Activated naive CD4-positive, alpha-beta T cell treated with anti-CD3 and anti-CD28 coated beads for 36 hours (primary cell): ENCODE measurements at regions of chr10 and their contacts with region 1.

Region 1: DNA sequence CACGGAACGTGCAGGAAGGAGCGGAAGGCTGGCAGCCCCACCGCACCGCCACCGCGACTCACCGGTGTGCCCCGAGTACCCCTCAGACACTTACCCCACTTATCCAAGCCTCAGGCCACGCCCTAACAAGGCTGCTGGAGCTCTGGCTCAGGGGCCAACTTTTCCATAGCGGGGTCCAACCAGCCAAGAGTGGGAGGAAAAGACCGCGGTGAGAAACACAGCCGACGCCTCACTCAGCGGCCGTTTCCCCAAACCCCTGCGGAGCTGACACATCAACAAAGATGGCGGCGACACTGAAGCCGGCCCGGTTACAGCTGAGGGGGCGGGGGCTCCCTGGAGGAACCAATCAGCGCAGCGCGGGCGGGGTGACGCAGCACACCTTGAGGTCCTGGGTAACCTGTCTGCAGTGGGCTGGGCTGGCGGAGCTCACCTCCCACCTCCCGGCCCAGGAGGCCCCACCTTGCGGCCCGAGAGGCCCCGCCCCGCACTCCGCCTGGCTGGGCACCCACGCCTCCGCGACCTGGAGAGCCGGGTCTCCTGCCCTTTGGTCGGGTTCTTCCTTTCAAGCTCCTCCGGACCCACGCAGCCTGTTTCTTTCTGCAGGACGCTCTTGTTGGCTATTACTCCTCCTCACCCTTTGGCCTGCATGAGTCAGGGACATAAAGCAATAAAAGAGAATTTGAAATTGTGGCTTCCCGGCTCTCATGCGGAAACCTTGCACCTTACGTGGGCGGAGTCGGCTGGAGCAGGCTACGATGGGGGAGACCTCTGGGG is at the start of gene CCDC186:
- DNase-seq: peak; percentile 99
- H3K4me3 Mint-ChIP-seq: peak within 1 kb of the TSS; percentile 98
- H3K27ac Mint-ChIP-seq: peak within 1 kb of the TSS; percentile 93
- H3K4me1 Mint-ChIP-seq: peaks cover 27% of the 10 kb centered on the region
- H3K27me3 Mint-ChIP-seq: no peaks in the 10 kb centered on the region
- total RNA-seq, gene CCDC186: 10.3 to 13.7 TPM

Region 2: GRCh38 chr10:113960617-113961181 is 213.4 kb before region 1 on chr10:
- CTCF ChIA-PET with region 1: no interaction called
- intact Hi-C with region 1: loop called (anchors 2 kb)
- DNase-seq: peak; percentile 39
- H3K4me3 Mint-ChIP-seq: no peak overlapping the region
- H3K27ac Mint-ChIP-seq: no peak overlapping the region
- H3K4me1 Mint-ChIP-seq: peaks cover 37% of the 10 kb centered on the region
- H3K27me3 Mint-ChIP-seq: peaks cover 7% of the 10 kb centered on the region

Region 3: GRCh38 chr10:114195079-114195478 is 21.0 kb after region 1 on chr10:
- CTCF ChIA-PET with region 1: no interaction called
- intact Hi-C with region 1: no loop called
- DNase-seq: no peak
- H3K4me3 Mint-ChIP-seq: no peak overlapping the region
- H3K27ac Mint-ChIP-seq: no peak overlapping the region
- H3K4me1 Mint-ChIP-seq: no peaks in the 10 kb centered on the region
- H3K27me3 Mint-ChIP-seq: peaks cover 6% of the 10 kb centered on the region

Region 4: GRCh38 chr10:114239117-114239993 is 65.2 kb after region 1 on chr10 and contains the start of gene VWA2:
- CTCF ChIA-PET with region 1: no interaction called
- intact Hi-C with region 1: loop called (anchors 2 kb)
- DNase-seq: peak; percentile 55
- H3K4me3 Mint-ChIP-seq: peak within 1 kb of the TSS; percentile 43
- H3K27ac Mint-ChIP-seq: no peak within 1 kb of the TSS
- H3K4me1 Mint-ChIP-seq: peaks cover 8% of the 10 kb centered on the region
- H3K27me3 Mint-ChIP-seq: peaks cover 52% of the 10 kb centered on the region
- total RNA-seq, gene VWA2: not detected

Region 5: GRCh38 chr10:114541081-114541796 is 367.1 kb after region 1 on chr10:
- CTCF ChIA-PET with region 1: no interaction called
- intact Hi-C with region 1: loop called (anchors 1 kb)
- DNase-seq: peak; percentile 87
- H3K4me3 Mint-ChIP-seq: peak overlapping the region; percentile 69
- H3K27ac Mint-ChIP-seq: peak overlapping the region; percentile 95
- H3K4me1 Mint-ChIP-seq: peaks cover 90% of the 10 kb centered on the region
- H3K27me3 Mint-ChIP-seq: no peaks in the 10 kb centered on the region

Region 6: GRCh38 chr10:114937962-114938855 is 764.1 kb after region 1 on chr10 and contains the start of gene TRUB1:
- CTCF ChIA-PET with region 1: no interaction called
- intact Hi-C with region 1: loop called (anchors 1 kb)
- DNase-seq: peak; percentile 97
- H3K4me3 Mint-ChIP-seq: peak within 1 kb of the TSS; percentile 95
- H3K27ac Mint-ChIP-seq: peak within 1 kb of the TSS; percentile 82
- H3K4me1 Mint-ChIP-seq: peaks cover 29% of the 10 kb centered on the region
- H3K27me3 Mint-ChIP-seq: no peaks in the 10 kb centered on the region
- total RNA-seq, gene TRUB1: 15.2 to 15.3 TPM